Heart left ventricle (tissue), 16 donors: ENCODE measurements at regions of chr16 and their contacts with region 1.

Region 1: GRCh38 chr16:47018223-47018891 is 44.9 kb upstream of the DNAJA2 start:
- DNase-seq: peak in 1 of 5 donors; percentile 12
- ATAC-seq: peak; percentile 42 to 77 (median 74)
- H3K4me3 ChIP-seq: no peak overlapping the region
- H3K27ac ChIP-seq: no peak overlapping the region
- H3K4me1 ChIP-seq: peaks cover 0 to 16% (median 0%) of the 10 kb centered on the region in 12 donors
- H3K27me3 ChIP-seq: no peaks in the 10 kb centered on the region
- CTCF ChIP-seq: peak in 11 of 12 donors; percentile 11 to 47 (median 33)
- POLR2A ChIP-seq: no peak

Region 2: DNA sequence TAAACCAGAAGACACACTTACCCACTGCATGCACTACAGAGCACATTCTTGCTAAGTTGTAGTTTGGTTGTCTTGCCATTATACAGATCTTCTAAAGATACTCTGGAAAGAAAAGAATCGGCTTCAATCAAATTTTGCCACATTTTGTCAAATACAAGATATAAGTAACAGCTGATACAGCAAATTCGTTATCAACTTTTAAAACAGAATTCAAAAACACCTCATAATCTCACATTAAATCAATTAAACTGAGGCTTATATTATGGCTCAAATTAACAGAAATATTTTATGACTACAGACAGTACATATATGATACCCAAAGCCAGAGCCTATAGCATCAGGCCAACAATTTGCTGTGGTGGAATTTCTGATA is 50.3 kb before region 1 on chr16:
- intact Hi-C with region 1: loop called in 1 of 10 experiments (anchors 2 kb)
- DNase-seq: no peak
- ATAC-seq: no peak
- H3K4me3 ChIP-seq: no peak overlapping the region
- H3K27ac ChIP-seq: no peak overlapping the region
- H3K4me1 ChIP-seq: peaks cover 0 to 44% (median 30%) of the 10 kb centered on the region in 12 donors
- H3K27me3 ChIP-seq: no peaks in the 10 kb centered on the region
- CTCF ChIP-seq: no peak
- POLR2A ChIP-seq: no peak